Heart right ventricle (tissue), 16 donors: ENCODE measurements at regions of chr13 and their contacts with region 1.

Region 1: GRCh38 chr13:112784811-112785482 is 95.1 kb downstream of the ATP11A start:
- DNase-seq: no peak
- ATAC-seq: peak in 1 of 8 donors; percentile 12
- H3K4me3 ChIP-seq: no peak overlapping the region
- H3K27ac ChIP-seq: no peak overlapping the region
- H3K4me1 ChIP-seq: peaks cover 10 to 39% (median 28%) of the 10 kb centered on the region in 9 donors
- H3K27me3 ChIP-seq: no peaks in the 10 kb centered on the region
- CTCF ChIP-seq: no peak

Region 2: GRCh38 chr13:112752711-112753541 is 32.0 kb before region 1 on chr13:
- intact Hi-C with region 1: no loop called
- DNase-seq: no peak
- ATAC-seq: peak in 3 of 8 donors; percentile 46 to 59 (median 47)
- H3K4me3 ChIP-seq: no peak overlapping the region
- H3K27ac ChIP-seq: no peak overlapping the region
- H3K4me1 ChIP-seq: peaks cover 2 to 31% (median 22%) of the 10 kb centered on the region in 9 donors
- H3K27me3 ChIP-seq: no peaks in the 10 kb centered on the region
- CTCF ChIP-seq: peak in 1 of 9 donors; percentile 10

Region 3: DNA sequence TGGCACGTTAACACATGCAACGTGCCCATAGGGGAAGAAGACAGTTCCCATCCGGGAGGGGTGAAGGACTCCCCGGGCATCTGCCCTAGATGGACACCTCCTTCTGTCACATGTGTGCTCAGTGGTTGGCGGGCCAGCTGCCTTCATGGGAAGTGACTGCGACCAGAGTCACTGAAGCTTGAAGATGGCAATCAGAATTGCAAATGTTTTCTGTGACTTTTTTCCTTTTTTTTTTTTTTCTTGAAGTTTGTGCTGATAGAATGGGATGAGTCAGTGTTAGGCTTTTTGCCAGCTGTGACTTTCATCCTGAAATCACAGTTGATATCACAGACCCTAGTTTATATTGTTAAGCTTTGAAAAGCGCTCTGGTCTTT is 74.9 kb after region 1 on chr13:
- intact Hi-C with region 1: loop called in 1 of 10 experiments (anchors 5 kb)
- DNase-seq: no peak
- ATAC-seq: peak; percentile 12 to 69 (median 49)
- H3K4me3 ChIP-seq: no peak overlapping the region
- H3K27ac ChIP-seq: peak overlapping the region in 1 of 10 donors; percentile 62
- H3K4me1 ChIP-seq: peaks cover 0 to 8% (median 0%) of the 10 kb centered on the region in 9 donors
- H3K27me3 ChIP-seq: no peaks in the 10 kb centered on the region
- CTCF ChIP-seq: no peak